ENCODE measurements at regions of chr16 and their contacts with region 1.

Region 1: GRCh38 chr16:68328151-68328859 is 17.5 kb downstream of the PRMT7 start:
- DNase-seq: peak; percentile 89
- H3K4me3 Mint-ChIP-seq: no peak overlapping the region
- H3K27ac Mint-ChIP-seq: no peak overlapping the region
- H3K4me1 Mint-ChIP-seq: peaks cover 25% of the 10 kb centered on the region
- H3K27me3 Mint-ChIP-seq: no peaks in the 10 kb centered on the region

Region 2: DNA sequence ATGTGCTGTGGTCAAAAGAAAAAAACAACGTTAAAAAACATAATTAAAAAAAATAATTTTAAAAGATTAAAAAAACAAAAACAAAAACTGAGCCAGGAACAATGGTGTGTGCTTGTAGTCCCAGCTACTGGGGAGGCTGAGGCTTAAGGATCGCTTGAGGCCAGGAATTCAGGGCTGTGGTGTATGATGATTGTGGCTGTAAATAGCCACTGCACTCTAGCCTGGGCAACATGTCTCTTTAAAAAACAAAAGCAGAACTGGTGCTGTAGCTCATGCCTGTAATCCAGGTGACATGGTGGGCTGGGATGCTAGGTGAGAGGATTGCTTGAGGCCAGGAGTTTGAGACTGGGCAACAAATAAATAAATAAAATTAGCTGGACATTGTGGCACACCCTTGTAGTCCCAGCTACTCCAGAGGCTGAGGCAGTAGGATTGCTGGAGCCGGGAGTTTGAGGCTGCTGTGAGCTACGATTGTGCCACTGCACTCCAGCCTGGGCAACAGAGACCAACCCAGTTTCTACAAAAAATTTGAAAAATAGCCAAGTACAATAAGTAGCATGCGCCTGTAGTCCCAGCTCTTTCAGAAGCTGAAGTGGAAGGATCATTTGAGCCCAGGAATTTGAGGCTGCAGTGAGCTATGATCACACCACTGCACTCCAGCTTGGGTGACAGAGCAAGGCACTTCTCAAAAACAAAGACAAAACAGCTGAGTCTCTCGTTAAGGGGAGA is 199.6 kb before region 1 on chr16:
- CTCF ChIA-PET with region 1: no interaction called
- intact Hi-C with region 1: no loop called
- DNase-seq: no peak
- H3K4me3 Mint-ChIP-seq: no peak overlapping the region
- H3K27ac Mint-ChIP-seq: no peak overlapping the region
- H3K4me1 Mint-ChIP-seq: peaks cover 60% of the 10 kb centered on the region
- H3K27me3 Mint-ChIP-seq: no peaks in the 10 kb centered on the region

Region 3: GRCh38 chr16:68244903-68245853 is 83.1 kb before region 1 on chr16 and contains the start of gene PLA2G15:
- CTCF ChIA-PET with region 1: interaction called, 24 read pairs
- intact Hi-C with region 1: loop called (anchors 1 kb)
- DNase-seq: peak; percentile 97
- H3K4me3 Mint-ChIP-seq: peak within 1 kb of the TSS; percentile 90
- H3K27ac Mint-ChIP-seq: no peak within 1 kb of the TSS
- H3K4me1 Mint-ChIP-seq: peaks cover 20% of the 10 kb centered on the region
- H3K27me3 Mint-ChIP-seq: no peaks in the 10 kb centered on the region
- total RNA-seq, gene PLA2G15: 4.2 to 5.4 TPM

Region 4: GRCh38 chr16:68251832-68252231 is 76.5 kb before region 1 on chr16:
- CTCF ChIA-PET with region 1: interaction called, 15 read pairs
- intact Hi-C with region 1: no loop called
- DNase-seq: no peak
- H3K4me3 Mint-ChIP-seq: no peak overlapping the region
- H3K27ac Mint-ChIP-seq: no peak overlapping the region
- H3K4me1 Mint-ChIP-seq: no peaks in the 10 kb centered on the region
- H3K27me3 Mint-ChIP-seq: no peaks in the 10 kb centered on the region

Region 5: DNA sequence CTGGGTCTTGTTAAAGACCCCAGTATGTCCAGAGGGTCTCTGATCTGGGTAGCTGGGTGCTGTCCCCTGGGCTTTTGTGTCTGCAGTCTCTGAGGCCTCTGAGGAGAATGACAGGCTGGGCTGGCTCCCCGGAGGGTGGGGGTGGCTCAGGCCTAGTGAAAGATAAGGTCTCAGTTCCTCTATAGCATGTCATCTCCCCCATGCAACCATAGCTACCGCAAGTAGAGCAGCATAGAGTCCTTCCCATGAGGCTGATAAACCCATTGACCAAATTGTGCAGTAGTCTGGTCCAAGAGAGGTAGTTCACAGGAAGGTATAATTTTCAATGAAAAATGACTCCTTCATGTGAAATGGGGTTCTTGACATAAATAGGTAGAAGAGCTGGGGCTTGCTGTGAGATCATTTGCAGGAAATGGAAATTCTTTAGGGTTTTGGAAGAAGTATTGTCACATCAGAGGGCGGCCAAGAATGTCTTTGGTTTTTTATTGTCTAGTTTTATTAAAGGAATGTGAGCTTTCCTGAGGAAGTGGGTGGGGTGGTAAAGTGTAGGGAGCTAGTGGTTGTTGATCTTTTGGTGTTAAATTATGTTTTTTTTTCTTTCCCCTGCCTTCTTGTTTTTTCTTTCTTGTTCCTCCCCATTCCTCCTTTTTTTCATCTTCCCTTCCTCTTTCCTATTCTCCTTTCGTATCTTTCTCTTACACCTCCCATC is 38.5 kb before region 1 on chr16:
- CTCF ChIA-PET with region 1: interaction called, 7 read pairs
- intact Hi-C with region 1: loop called (anchors 2 kb)
- DNase-seq: peak; percentile 81
- H3K4me3 Mint-ChIP-seq: no peak overlapping the region
- H3K27ac Mint-ChIP-seq: peak overlapping the region; percentile 92
- H3K4me1 Mint-ChIP-seq: peaks cover 87% of the 10 kb centered on the region
- H3K27me3 Mint-ChIP-seq: no peaks in the 10 kb centered on the region

Region 6: DNA sequence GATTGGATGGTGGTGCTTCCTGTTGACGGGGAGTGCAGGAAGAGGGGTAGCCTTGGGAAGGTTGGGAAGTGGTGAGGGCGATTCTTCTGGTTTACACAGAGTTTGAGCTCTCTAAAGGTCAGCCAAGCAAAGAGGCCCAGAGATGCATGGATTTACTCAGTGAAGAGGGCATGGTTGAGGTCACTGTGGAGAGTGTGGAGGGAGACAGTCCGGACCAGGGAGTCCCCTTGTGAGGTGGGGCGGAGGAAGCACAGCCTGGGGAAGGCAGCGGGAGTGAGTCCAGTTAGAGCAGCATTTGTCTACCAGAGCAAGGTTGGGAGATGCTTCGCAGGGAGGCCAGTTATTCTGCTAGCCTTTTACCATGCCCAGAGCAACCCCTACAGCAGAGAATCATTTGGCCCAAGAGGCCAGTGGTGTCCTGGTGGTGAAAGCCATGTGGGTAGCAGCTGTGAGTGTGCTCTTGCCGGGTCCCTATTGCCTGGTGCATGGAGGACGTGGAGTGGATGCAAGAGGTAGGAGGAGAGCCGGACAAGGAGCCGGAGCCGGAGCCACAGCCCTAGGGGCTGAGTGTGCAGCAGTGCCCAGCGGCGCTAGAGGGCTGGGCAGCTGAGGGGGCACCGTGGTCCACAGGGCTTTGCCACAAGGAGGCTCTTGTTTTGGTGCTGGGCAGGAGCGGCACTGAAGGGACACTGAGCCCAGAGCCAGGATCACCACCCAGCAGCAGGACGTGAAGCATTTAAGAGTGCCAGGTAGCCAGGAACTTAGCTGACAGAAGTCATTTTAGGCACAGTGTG is 10.2 kb after region 1 on chr16:
- CTCF ChIA-PET with region 1: interaction called, 14 read pairs
- intact Hi-C with region 1: no loop called
- DNase-seq: no peak
- H3K4me3 Mint-ChIP-seq: no peak overlapping the region
- H3K27ac Mint-ChIP-seq: no peak overlapping the region
- H3K4me1 Mint-ChIP-seq: peaks cover 1% of the 10 kb centered on the region
- H3K27me3 Mint-ChIP-seq: no peaks in the 10 kb centered on the region

Region 7: DNA sequence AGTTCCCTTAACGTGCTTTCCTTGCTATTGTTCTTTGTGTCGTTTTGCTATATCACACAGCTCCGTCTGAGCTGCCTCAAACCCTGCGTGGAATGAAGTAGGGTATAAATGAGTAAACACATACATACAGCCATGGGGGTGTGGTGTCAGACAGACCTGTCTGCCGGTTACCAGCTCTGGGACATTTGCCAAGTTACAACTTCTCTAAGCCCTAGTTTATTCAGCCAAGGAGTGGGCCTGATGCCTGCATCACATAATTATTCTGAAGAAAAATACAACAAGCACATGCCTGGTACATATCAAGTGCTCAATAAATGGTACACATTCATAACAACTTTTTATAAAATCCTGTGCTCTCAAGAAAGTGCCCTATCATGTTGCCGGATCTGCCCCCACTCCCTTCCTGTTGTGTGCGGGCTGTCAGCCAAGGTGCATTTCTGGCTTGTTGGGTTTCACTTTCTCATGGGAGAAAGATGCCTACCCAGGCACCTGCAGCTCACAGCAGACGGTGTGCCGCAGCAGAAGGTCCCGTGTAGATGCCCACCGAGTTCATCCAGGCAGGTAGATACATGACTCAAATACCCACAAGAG is 89.5 kb after region 1 on chr16:
- CTCF ChIA-PET with region 1: no interaction called
- intact Hi-C with region 1: no loop called
- DNase-seq: peak; percentile 89
- H3K4me3 Mint-ChIP-seq: peak overlapping the region; percentile 66
- H3K27ac Mint-ChIP-seq: peak overlapping the region; percentile 92
- H3K4me1 Mint-ChIP-seq: peaks cover 52% of the 10 kb centered on the region
- H3K27me3 Mint-ChIP-seq: no peaks in the 10 kb centered on the region

Measured in activated naive CD4-positive, alpha-beta T cell treated with anti-CD3 and anti-CD28 coated beads for 36 hours (primary cell).